HepG2 (cell line): ENCODE measurements at regions of chr1 and their contacts with region 1.

Region 1: GRCh38 chr1:9292361-9293240 is at the start of gene SPSB1:
- DNase-seq: peak; percentile 44
- ATAC-seq: peak; percentile 79
- H3K4me3 ChIP-seq: peak within 1 kb of the TSS; percentile 53 to 83 (median 76)
- H3K27ac ChIP-seq: peak within 1 kb of the TSS; percentile 43
- H3K4me1 ChIP-seq: peaks cover 66% of the 10 kb centered on the region
- H3K27me3 ChIP-seq: no peaks in the 10 kb centered on the region
- CTCF ChIP-seq: no peak
- EP300 ChIP-seq: no peak
- POLR2A ChIP-seq: peak; percentile 72 to 73
- RAD21 ChIP-seq: no peak
- total RNA-seq, gene SPSB1: 5.0 and 7.1 TPM in 2 replicates

Region 2: DNA sequence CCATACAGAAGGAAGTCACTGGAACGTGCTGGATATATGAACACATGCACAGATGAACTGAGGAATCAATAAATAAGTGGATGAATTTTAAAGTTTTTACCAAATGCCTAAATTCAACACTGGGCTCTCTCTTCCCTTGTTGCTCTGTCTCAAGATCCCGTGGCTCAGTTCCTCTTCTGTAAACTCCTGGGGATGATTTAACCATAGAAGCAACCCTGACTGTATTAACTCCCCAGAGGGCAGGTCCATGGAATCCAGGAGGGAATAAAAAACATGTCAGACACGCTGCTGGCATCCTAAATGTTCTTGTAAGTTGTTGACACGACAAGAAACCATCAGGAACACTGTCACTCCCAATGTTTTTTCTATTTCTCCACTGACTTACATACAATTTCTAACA is 118.4 kb before region 1 on chr1:
- CTCF ChIA-PET with region 1: no interaction called
- POLR2A ChIA-PET with region 1: no interaction called
- in situ Hi-C with region 1: no loop called
- intact Hi-C with region 1: no loop called
- DNase-seq: no peak
- ATAC-seq: no peak
- H3K4me3 ChIP-seq: no peak overlapping the region
- H3K27ac ChIP-seq: no peak overlapping the region
- H3K4me1 ChIP-seq: peaks cover 77% of the 10 kb centered on the region
- H3K27me3 ChIP-seq: no peaks in the 10 kb centered on the region
- CTCF ChIP-seq: no peak
- EP300 ChIP-seq: no peak
- POLR2A ChIP-seq: no peak
- RAD21 ChIP-seq: no peak

Region 3: GRCh38 chr1:9267352-9267686 is 25.3 kb before region 1 on chr1:
- CTCF ChIA-PET with region 1: no interaction called
- POLR2A ChIA-PET with region 1: no interaction called
- in situ Hi-C with region 1: no loop called
- intact Hi-C with region 1: loop called (anchors 2 kb)
- DNase-seq: no peak
- ATAC-seq: peak; percentile 14; the same call in 2 of the 3 replicates
- H3K4me3 ChIP-seq: no peak overlapping the region
- H3K27ac ChIP-seq: no peak overlapping the region
- H3K4me1 ChIP-seq: no peaks in the 10 kb centered on the region; the same call in 1 of the 2 replicates
- H3K27me3 ChIP-seq: no peaks in the 10 kb centered on the region
- CTCF ChIP-seq: no peak
- EP300 ChIP-seq: no peak
- POLR2A ChIP-seq: no peak
- RAD21 ChIP-seq: no peak

Region 4: DNA sequence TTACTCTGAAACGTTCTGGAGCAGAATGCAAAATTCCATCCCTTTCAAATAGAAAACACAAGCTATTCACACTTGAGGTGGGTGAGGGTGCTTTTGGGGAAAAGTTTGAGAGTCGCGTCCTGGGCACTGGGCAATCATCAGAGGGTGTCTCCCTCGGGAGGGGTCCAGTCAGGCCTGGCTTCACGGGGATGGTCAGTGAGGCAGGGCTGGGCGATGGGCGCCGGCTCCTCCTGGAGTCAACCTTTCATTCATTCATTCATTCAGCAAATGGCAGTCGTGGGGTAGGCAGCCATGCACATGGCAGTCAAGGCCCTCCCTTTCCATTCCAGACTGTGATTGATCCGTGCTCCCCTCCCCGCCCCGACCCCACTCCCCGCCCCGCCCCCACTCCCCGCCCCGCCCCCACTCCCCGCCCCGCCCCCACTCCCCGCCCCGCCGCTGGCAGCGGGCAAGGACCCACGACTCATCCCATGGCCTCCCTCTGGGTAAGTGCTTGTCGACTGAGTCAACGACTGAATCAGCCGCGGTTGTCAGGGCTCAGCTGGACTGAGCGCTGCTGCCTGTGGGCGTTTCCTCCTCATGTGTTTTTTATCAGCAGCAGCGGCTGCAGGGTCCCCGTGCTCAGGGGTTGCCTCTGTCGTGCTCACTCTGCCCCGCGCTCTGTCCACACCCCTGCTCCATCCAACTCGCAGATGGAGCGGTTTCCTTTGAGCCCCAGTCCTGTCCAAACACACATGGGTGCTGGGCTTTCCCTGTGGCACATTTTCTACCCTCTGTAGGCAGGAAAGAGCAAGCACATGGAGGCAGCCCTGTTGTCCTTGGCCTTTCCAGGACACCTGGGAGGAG is 12.4 kb before region 1 on chr1:
- CTCF ChIA-PET with region 1: no interaction called
- POLR2A ChIA-PET with region 1: interaction called, 10 read pairs
- in situ Hi-C with region 1: no loop called
- intact Hi-C with region 1: no loop called
- DNase-seq: peak; percentile 35
- ATAC-seq: peak; percentile 58
- H3K4me3 ChIP-seq: peak overlapping the region; percentile 29 to 67 (median 53)
- H3K27ac ChIP-seq: peak overlapping the region; percentile 27
- H3K4me1 ChIP-seq: peaks cover 50% of the 10 kb centered on the region
- H3K27me3 ChIP-seq: no peaks in the 10 kb centered on the region
- CTCF ChIP-seq: no peak
- EP300 ChIP-seq: no peak
- POLR2A ChIP-seq: no peak
- RAD21 ChIP-seq: no peak

Region 5: DNA sequence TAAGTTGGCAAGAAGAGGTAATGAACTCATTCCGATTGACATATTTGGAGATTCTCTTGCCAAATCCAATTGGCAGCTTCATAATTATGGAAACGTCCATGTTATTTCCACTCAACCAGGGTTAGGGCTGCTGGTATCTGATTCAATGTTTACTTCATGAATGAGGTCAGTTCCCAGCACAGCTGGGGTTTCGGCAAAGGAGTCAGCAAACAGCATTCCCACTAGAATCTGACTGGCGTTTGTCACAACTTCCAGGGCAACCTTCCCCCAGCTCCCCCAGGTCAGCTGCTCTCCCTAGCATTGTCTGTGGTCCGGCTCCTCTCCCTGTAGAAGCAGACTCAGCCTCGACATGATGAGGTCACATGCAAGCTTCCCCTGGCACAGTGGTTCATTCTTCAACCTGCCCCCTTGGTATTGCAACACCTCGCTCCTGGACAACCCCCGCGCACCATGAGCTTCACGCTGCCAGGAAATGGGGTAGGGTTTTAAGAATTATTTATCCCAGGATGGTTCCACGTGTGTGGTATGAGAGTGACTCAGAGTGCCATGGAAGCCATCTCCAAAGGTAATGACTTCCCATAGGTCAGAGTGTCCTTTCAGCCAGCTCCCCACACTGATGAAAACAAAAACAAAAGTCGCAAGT is 146.0 kb after region 1 on chr1:
- CTCF ChIA-PET with region 1: no interaction called
- POLR2A ChIA-PET with region 1: interaction called, 11 read pairs
- in situ Hi-C with region 1: no loop called
- intact Hi-C with region 1: no loop called
- DNase-seq: peak; percentile 91
- ATAC-seq: peak; percentile 59
- H3K4me3 ChIP-seq: peak overlapping the region; percentile 29 to 64 (median 30)
- H3K27ac ChIP-seq: peak overlapping the region; percentile 88
- H3K4me1 ChIP-seq: peaks cover 100% of the 10 kb centered on the region
- H3K27me3 ChIP-seq: no peaks in the 10 kb centered on the region
- CTCF ChIP-seq: no peak
- EP300 ChIP-seq: peak; percentile 52 to 64; a peak in 2 of 4 replicates
- POLR2A ChIP-seq: peak; percentile 49 to 51; a peak in 2 of 4 replicates
- RAD21 ChIP-seq: no peak

Region 6: GRCh38 chr1:9455487-9456234 is 163.1 kb after region 1 on chr1:
- CTCF ChIA-PET with region 1: interaction called, 42 read pairs
- POLR2A ChIA-PET with region 1: no interaction called
- in situ Hi-C with region 1: loop called (anchors 5 kb)
- intact Hi-C with region 1: loop called (anchors 1 kb)
- DNase-seq: peak; percentile 61
- ATAC-seq: peak; percentile 89
- H3K4me3 ChIP-seq: no peak overlapping the region
- H3K27ac ChIP-seq: no peak overlapping the region
- H3K4me1 ChIP-seq: peaks cover 45% of the 10 kb centered on the region
- H3K27me3 ChIP-seq: peaks cover 0 to 12% of the 10 kb centered on the region in 2 experiments; a peak in 1 of 5 replicates
- CTCF ChIP-seq: peak; percentile 94
- EP300 ChIP-seq: no peak
- POLR2A ChIP-seq: no peak
- RAD21 ChIP-seq: peak; percentile 96

Region 7: DNA sequence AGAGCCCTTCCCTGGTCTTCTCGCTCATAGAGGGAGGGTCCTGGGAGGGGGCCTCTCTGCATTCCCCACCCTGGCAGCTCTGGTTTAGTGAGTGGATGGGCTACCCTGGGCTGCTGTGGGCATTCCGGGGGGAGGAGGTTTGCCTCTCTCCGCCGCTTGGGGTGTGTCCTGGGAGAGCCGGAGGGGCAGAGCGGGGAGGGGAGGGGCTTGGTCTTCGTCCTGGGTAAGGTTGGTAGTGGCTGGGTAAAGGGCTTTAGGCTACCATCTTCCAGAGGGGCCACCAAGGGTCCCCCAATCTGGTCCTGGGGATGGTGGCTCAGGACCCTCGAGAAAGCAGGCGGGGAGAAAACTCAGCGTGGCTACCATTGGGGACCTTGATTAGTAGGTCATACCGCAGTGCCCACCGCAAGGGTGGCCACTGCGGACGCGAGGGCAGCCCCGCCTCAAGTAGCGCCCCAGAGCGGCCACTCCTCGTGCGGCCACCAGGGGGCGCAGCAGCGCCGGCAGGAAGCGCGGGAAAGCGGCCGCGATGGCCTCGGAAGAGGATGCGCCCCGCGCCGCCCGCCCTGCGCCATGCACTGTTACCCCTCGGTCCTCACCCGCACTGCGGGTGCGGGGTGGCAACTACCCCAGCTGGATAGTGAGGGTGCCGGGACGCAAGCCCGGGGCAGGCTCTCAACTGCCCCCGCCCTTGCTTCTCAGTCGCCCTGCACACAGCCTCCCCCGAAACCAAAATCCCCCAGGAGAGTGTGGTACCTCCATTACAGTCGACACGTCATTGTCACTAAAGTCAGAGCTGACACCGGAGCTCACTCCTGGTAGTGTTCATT is 202.5 kb after region 1 on chr1:
- CTCF ChIA-PET with region 1: interaction called, 42 read pairs
- POLR2A ChIA-PET with region 1: interaction called, 7 read pairs
- in situ Hi-C with region 1: no loop called
- intact Hi-C with region 1: loop called (anchors 1 kb)
- DNase-seq: no peak
- ATAC-seq: peak; percentile 76
- H3K4me3 ChIP-seq: no peak overlapping the region; a peak in 1 of 6 replicates
- H3K27ac ChIP-seq: no peak overlapping the region
- H3K4me1 ChIP-seq: peaks cover 51% of the 10 kb centered on the region
- H3K27me3 ChIP-seq: no peaks in the 10 kb centered on the region
- CTCF ChIP-seq: peak; percentile 90
- EP300 ChIP-seq: no peak
- POLR2A ChIP-seq: no peak
- RAD21 ChIP-seq: peak; percentile 98